OCI-LY7 (cell line): ENCODE measurements at regions of chr11 and their contacts with region 1.

Region 1: GRCh38 chr11:67265633-67266423 is 445 bp upstream of the GRK2 start:
- DNase-seq: peak; percentile 82
- H3K4me3 ChIP-seq: peak overlapping the region; percentile 50
- H3K27ac ChIP-seq: peak overlapping the region; percentile 36
- H3K4me1 ChIP-seq: peaks cover 74% of the 10 kb centered on the region
- CTCF ChIP-seq: peak; percentile 72

Region 2: GRCh38 chr11:67118801-67119584 is 146.8 kb before region 1 on chr11 and contains the start of gene KDM2A:
- CTCF ChIA-PET with region 1: no interaction called
- POLR2A ChIA-PET with region 1: no interaction called
- intact Hi-C with region 1: loop called (anchors 1 kb)
- DNase-seq: peak; percentile 99
- H3K4me3 ChIP-seq: peak within 1 kb of the TSS; percentile 87
- H3K27ac ChIP-seq: peak within 1 kb of the TSS; percentile 91
- H3K4me1 ChIP-seq: peaks cover 29% of the 10 kb centered on the region
- CTCF ChIP-seq: no peak
- total RNA-seq, gene KDM2A: 25.4 and 31.7 TPM in 2 replicates

Region 3: GRCh38 chr11:67277231-67277961 is 11.6 kb after region 1 on chr11:
- CTCF ChIA-PET with region 1: interaction called, 6 read pairs
- POLR2A ChIA-PET with region 1: interaction called, 10 read pairs
- intact Hi-C with region 1: loop called (anchors 1 kb)
- DNase-seq: peak; percentile 99
- H3K4me3 ChIP-seq: peak overlapping the region; percentile 61
- H3K27ac ChIP-seq: peak overlapping the region; percentile 98
- H3K4me1 ChIP-seq: peaks cover 69% of the 10 kb centered on the region
- CTCF ChIP-seq: no peak; the same call in 1 of the 2 replicates

Region 4: DNA sequence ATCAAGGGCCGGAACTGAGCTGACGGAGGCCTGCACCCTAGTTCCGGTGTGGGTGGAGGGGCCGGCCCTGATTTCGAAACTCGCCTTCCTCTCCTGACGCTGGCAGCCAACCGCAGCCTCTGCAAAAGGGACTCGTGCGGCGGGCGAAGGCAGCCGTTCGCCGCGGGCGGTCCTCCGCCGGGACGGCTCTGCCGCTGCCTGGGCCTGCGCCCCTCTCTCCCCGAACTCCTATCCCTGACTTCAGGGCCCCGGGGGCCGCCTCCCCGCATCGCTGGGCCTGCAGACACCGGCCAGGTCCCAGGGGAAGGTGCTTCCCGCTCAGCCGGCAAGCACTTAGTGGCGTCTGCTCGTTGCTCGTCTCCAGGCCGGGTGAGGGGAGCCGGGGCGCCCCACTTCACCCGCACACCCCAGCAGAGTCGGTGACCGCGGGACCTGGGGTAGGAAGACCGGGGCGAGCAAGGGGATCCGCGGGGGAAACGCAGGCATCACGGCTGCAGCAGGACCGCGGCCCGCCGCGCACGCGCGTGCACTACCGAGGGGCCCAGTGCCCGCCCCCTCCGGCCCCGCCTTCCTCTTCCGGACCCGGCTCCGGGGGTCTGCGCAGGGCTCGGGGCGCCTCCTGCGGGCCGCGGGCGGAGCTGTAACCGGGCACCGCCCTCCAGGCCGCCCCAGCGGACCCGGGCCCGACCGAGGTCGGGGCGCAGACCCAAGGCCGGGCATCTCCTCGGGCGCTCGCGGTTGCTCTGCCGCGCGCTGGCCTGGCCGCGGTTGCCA is 22.8 kb after region 1 on chr11:
- CTCF ChIA-PET with region 1: interaction called, 4 read pairs
- POLR2A ChIA-PET with region 1: interaction called, 5 read pairs
- intact Hi-C with region 1: loop called (anchors 1 kb)
- DNase-seq: peak; percentile 94
- H3K4me3 ChIP-seq: peak overlapping the region; percentile 68
- H3K27ac ChIP-seq: peak overlapping the region; percentile 94
- H3K4me1 ChIP-seq: peaks cover 47% of the 10 kb centered on the region
- CTCF ChIP-seq: peak; percentile 67

Region 5: DNA sequence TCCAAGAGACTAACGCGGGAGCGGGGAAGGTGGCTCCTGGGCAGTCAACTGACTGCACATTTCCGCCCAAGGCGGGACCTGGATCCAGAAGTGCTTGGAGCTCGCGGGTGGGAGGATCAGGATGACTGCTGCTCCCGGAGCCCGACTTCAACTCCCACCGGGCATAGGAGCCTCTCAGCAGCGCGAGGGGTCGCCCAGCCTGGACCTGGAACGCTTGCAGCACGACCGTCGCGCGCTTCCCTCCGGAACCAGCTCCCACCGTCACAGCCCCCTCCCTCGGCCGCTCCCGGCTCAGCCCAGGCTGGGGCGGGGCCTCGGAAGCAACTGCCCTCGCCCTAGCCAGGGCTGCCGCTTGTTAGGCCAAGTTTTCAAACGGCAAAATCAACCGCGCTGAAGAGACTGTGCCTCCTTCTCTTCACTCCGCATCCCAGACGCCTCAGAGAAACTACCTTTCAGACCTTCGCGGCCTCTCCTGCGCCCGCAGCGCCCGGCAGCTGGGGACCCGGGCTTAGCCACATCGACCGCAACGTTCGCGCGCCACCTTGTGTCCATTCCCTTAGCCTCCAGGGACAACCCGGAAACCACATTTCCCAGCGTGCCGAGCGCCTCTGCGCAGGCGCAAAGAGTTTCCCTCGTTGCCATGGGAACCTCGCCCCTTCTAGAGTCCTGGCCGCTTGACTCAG is 51.5 kb after region 1 on chr11:
- CTCF ChIA-PET with region 1: interaction called, 10 read pairs
- POLR2A ChIA-PET with region 1: interaction called, 4 read pairs
- intact Hi-C with region 1: loop called (anchors 1 kb)
- DNase-seq: peak; percentile 99
- H3K4me3 ChIP-seq: peak overlapping the region; percentile 78
- H3K27ac ChIP-seq: peak overlapping the region; percentile 93
- H3K4me1 ChIP-seq: peaks cover 13% of the 10 kb centered on the region
- CTCF ChIP-seq: peak; percentile 89

Region 6: GRCh38 chr11:67332081-67332691 is 66.4 kb after region 1 on chr11:
- CTCF ChIA-PET with region 1: no interaction called
- POLR2A ChIA-PET with region 1: no interaction called
- intact Hi-C with region 1: no loop called
- DNase-seq: no peak
- H3K4me3 ChIP-seq: no peak overlapping the region
- H3K27ac ChIP-seq: no peak overlapping the region
- H3K4me1 ChIP-seq: no peaks in the 10 kb centered on the region
- CTCF ChIP-seq: no peak